ENCODE measurements at regions of chr3 and their contacts with region 1.

Region 1: DNA sequence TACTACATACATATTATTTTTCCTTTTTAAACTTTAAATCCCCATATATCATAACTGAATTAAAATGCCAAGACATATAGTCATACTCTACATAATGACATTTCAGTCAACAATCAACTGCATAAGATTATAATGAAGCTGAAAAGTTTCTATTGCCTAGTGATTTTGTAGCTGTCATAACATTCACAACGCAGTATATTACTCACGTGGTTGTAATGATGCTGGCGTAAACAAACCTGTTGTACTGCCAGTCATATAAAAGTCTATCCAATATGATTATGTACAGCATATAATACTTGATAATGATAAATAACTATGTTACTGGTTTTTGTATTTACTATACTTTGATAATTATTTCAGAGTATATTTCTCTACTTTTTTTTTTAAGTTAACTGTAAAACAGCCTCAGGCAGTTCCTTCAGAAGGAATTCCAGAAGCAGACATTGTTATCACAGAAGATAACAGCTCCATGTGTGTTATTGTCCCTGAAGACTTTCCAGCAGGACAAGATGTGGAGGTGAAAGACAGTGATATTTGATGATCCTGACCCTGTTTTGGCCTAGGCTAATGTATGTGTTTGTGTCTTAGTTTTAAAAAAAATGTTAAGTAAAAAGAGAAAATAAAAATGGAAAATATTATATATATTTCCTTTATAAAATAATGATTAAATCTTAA is 443.4 kb upstream of the UBE2E2 start:
- DNase-seq: no peak
- ATAC-seq: no peak

Region 2: GRCh38 chr3:24614361-24614760 is 1854.6 kb after region 1 on chr3:
- intact Hi-C with region 1: loop called (anchors 5 kb)
- DNase-seq: no peak
- ATAC-seq: no peak

Measured in sciatic nerve (tissue), 2 donors.